ENCODE measurements at regions of chr17 and their contacts with region 1.

Region 1: DNA sequence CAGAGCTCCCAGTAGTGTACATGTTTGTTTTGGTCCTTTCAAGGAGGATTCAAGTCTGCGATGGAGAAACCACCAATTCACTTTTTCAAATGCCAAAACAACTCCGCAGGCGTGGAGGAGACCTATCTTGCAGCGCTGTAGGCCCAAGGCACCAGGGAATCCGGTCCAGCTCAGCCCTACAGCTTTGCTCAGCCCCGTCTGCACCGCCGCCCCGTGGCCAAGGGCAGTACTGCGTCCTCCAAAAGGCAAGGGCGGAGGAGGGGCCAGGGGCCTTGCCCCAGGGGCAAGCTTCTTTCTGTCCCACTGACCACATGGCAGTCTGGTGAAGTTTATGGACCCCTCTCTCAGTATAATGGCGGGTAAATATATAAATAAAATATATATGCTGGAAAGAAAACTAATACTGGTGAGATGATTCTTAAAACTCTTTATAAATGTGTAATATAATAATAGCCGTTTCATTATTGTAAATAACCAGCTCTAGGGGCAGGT is 709 bp upstream of the CD300LG start:
- H3K4me3 ChIP-seq: no peak overlapping the region
- H3K27ac ChIP-seq: no peak overlapping the region
- H3K4me1 ChIP-seq: peaks cover under 1% of the 10 kb centered on the region
- CTCF ChIP-seq: peak; percentile 80

Region 2: DNA sequence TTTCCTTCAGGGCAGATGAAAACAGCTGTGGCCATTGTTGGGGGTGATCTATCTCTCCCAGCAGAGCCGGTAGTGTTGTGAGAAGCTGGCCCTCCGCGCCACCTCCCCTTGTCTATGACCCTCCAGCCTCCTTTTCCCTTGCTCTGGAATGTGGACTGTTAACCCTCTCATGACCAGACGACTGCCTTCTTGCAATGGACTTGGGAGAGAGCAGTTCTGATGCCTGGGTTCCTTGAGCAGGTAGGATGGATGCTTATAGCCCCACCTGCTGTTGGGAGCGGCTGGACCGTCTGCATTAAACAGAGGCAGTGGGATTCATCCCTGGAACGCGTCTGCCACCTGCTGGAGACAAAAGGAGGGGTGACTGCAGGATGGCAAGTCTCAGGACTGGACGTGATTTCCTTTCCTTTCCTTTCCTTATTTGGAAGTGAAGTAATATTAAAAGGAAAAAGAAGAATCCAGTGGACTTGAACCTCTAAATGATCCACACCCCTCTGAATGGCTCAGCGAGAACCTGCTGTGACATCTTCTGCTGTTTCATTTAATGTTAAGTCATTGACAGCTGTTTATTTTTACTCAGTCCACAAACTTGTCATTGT is 85.9 kb before region 1 on chr17:
- CTCF ChIA-PET with region 1: interaction called, 28 read pairs
- POLR2A ChIA-PET with region 1: no interaction called
- H3K4me3 ChIP-seq: no peak overlapping the region
- H3K27ac ChIP-seq: no peak overlapping the region
- H3K4me1 ChIP-seq: peaks cover 2% of the 10 kb centered on the region; the same call in 1 of the 2 replicates
- CTCF ChIP-seq: peak; percentile 100

Region 3: DNA sequence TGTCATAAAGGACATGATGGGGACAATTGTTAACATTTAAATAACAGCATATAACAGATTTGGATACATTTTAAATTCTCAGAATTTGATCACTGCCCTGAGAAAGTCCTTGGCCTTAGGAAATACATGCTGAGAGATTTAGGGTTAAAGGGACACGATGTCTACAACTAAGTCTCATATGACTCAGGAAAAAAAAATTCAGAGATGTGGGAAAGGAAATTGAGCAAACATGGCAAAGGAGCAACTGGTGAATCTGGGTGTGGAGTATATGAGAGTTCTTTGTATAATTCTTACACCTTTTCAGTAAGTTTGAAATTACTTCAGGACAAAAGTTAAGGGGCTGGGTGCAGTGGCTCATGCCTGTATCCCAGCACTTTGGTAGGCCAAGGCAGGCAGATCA is 31.6 kb before region 1 on chr17:
- CTCF ChIA-PET with region 1: interaction called, 21 read pairs
- POLR2A ChIA-PET with region 1: interaction called, 7 read pairs
- H3K4me3 ChIP-seq: no peak overlapping the region
- H3K27ac ChIP-seq: no peak overlapping the region
- H3K4me1 ChIP-seq: no peaks in the 10 kb centered on the region
- CTCF ChIP-seq: no peak

Region 4: GRCh38 chr17:43832976-43833829 is 13.1 kb before region 1 on chr17 and contains the start of gene MPP3:
- CTCF ChIA-PET with region 1: interaction called, 29 read pairs
- POLR2A ChIA-PET with region 1: interaction called, 3 read pairs
- H3K4me3 ChIP-seq: peak within 1 kb of the TSS; percentile 69
- H3K27ac ChIP-seq: peak within 1 kb of the TSS; percentile 33; the same call in 1 of the 2 replicates
- H3K4me1 ChIP-seq: peaks cover 3% of the 10 kb centered on the region; the same call in 1 of the 2 replicates
- CTCF ChIP-seq: no peak

Region 5: DNA sequence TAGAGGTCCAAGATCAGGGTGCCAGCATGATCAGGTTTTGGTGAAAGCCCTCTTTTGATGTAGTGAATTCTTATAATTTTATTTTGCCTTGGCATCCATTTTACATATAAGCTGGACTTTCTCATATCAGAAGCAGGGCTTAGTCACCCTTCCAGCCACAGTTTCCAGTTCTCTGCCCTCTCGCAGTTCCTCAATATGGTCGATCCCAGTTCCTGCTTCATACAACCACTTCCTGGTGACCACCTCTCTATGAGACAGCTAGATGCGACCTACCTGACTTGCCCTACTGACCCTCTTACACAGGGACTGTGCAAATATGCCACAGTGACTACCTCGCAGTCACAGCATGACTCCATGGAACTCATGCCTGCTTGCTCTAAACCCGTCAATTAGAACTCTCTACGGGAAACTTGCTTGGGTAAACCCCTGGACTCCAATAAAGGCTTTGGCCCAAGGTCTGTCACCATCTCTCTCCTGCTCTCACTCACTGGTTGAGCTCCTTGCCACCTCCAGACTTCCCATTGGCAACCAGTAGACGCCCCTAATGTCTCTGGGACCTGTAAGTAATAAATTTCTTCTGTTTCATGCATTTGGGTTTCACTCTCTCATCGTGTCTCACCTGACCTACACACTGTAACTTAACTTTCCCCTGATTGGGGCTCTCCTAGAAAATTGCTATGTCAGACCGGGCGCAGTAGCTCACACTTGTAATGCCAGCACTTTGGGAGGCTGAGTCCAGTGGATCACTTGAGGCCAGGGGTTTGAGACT is 22.1 kb after region 1 on chr17:
- CTCF ChIA-PET with region 1: interaction called, 28 read pairs
- POLR2A ChIA-PET with region 1: no interaction called
- H3K4me3 ChIP-seq: no peak overlapping the region
- H3K27ac ChIP-seq: no peak overlapping the region
- H3K4me1 ChIP-seq: no peaks in the 10 kb centered on the region
- CTCF ChIP-seq: no peak